ENCODE measurements at regions of chr3 and their contacts with region 1.

Region 1: DNA sequence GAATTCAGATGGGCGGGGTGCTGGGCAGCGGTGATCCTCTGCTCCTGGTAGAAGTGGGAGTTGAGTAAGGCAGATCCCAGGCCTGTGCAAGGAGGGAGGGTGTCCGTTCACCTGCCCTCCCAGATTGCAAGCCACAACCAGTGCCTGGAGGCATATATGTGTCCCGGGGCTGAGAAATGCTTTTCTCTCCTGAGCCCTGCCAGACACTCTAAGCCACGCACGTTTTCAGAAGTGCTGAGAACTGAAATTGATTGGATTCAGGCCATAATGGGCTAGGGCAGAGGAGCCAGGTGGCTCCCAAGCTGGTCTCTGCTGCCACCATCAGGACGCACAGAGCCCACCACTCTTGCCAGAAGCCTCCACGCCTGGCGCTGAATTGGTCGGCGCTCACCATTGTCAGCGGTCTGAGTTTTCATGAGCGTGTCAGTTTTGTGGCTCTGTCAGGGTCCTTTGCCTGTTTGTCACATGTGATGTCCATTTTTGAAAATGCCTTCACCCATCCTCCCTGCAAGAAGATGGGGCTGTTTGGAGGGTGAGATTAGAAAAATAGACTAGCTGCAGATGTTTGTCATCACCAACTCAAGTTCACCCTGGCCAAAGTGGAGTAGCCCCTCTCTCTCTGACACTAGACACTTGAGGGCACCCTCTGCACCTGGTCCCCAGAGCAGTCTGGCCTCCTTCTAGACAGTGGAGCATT is 15.4 kb upstream of the BFSP2 start:
- DNase-seq: peak; percentile 66

Region 2: GRCh38 chr3:132730891-132731580 is 653.4 kb before region 1 on chr3:
- in situ Hi-C with region 1: loop called (anchors 10 kb)
- DNase-seq: peak; percentile 20

Region 3: GRCh38 chr3:133040696-133041523 is 343.6 kb before region 1 on chr3:
- in situ Hi-C with region 1: loop called (anchors 25 kb)
- DNase-seq: peak; percentile 70

Region 4: DNA sequence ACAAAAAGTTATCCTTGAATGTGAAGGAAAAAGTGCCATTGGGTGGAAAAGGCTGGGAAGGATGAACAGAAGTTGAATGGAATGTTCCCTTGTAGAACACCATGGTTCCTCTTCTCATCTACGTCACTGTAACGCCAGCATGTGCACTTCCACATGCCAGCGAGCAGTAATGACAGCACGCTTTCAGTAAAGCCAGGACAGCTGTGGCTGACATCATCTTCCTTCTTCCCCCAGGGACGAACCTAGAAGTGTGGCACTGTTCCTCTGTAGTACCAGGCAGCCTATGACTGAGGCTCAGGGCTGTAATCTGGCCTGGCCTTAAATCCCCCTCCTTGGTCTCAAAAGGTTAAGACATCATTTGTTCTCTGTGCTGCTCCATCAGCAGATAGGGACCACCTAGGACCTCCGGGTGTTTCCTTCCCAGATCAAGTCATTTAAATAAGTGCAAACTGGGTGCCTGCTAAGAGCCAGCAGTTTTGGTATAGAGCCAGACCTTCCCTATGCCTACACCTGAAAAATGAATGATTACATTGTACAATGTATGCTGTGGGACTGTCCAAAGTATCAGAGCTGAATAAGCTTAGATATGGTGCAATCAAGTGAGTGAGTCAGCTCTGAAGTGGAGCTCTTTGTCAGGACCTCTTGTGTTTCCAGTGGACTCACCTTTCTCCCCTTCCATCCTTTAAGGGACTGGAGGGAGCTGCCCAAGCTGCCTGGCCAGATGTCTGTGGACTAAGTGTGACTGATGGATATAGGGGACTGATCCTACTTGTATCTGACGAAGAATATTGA is 415.5 kb after region 1 on chr3:
- in situ Hi-C with region 1: no loop called
- DNase-seq: peak; percentile 16

Measured in KBM-7 (cell line).